ENCODE measurements at regions of chr10 and their contacts with region 1.

Region 1: DNA sequence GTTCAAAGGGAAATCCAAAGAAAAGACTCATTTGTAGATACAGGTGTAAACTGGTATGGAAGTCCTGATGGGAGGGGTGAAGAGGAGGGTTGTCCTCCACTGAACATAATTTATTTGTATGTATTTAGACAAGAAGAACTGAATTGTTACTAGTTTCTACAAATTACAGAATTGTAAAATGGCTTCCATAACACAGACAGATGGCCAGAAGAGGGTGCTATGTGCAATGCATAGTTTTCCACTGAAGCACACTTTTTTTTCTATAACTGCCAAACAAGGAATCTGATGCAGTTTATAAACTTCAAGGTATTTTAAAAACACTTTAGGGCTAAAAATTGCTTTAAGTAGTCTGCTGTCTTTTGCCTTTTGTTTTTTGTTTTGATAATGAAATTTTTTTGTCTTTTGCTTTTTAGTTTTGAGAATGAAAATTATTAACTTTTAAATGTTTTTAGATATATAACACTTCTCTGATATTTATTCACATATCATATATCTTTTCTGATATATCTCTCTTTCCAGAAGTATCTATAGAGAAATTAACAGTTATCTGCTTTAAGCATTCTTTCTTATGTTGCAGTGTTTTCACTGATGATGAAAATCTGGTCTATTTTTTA is 58.5 kb downstream of the PHYHIPL start:
- DNase-seq: no peak
- ATAC-seq: peak; percentile 58
- H3K4me3 ChIP-seq: no peak overlapping the region
- H3K27ac ChIP-seq: no peak overlapping the region
- H3K4me1 ChIP-seq: no peaks in the 10 kb centered on the region
- H3K27me3 ChIP-seq: no peaks in the 10 kb centered on the region
- CTCF ChIP-seq: peak; percentile 44 to 57 (median 45); a peak in 5 of 6 replicates
- EP300 ChIP-seq: no peak
- POLR2A ChIP-seq: no peak
- RAD21 ChIP-seq: peak; percentile 42

Region 2: GRCh38 chr10:59222788-59223187 is 12.1 kb before region 1 on chr10:
- CTCF ChIA-PET with region 1: interaction called, 4 read pairs
- POLR2A ChIA-PET with region 1: no interaction called
- RAD21 ChIA-PET with region 1: interaction called, 3 read pairs
- SMC1A ChIA-PET with region 1: interaction called, 11 read pairs
- in situ Hi-C with region 1: no loop called
- intact Hi-C with region 1: no loop called
- DNase-seq: no peak
- ATAC-seq: no peak
- H3K4me3 ChIP-seq: no peak overlapping the region
- H3K27ac ChIP-seq: no peak overlapping the region
- H3K4me1 ChIP-seq: no peaks in the 10 kb centered on the region
- H3K27me3 ChIP-seq: no peaks in the 10 kb centered on the region
- CTCF ChIP-seq: no peak
- EP300 ChIP-seq: no peak
- POLR2A ChIP-seq: no peak
- RAD21 ChIP-seq: no peak

Measured in GM12878 (cell line).